Right ventricle myocardium superior (tissue), 1 donor: ENCODE measurements at regions of chr22 and their contacts with region 1.

Region 1: GRCh38 chr22:40436505-40437451 is 66.4 kb downstream of the SGSM3 start:
- DNase-seq: no peak
- ATAC-seq: peak; percentile 69

Region 2: DNA sequence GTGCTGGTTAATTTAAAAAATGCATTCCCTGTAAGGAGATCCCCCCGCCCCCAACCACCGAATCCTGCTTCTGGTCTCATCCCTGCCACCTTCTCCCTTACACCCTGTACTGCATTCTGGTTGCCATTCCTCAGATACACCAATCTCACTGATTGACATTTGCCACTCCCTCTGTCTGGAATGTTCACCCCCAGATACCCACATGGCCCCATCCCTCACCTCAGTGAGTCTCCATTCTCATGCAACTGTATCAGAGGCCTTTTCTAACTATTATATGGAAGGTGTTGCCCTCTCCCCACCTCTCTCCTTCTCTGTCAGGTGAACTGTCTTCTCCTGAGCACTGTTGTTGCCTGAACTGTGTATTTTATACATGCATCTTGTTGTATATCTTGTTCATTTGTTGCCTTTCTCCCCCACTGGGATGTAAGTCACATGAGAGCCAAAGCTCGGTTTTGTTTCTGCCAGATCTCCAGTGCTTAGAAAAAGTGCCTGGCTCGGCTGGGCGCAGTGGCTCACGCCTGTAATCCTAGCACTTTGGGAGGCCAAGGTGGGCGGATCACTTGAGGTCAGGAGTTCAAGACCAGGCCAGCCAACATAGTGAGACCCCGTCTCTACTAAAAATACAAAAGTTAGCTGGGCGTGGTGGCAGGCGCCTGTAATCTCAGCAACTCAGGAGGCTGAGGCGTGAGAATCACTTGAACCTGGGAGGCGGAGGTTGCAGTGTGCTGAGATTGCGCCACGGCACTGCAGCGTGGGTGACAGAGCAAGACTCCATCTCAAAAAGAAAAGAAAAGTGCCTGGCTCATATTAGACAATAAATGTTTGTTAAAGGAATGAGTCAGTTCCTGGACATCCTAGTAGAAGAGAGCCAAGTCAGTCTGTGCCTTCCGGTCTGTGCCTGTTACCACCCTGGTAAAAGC is 198.1 kb before region 1 on chr22:
- intact Hi-C with region 1: no loop called
- DNase-seq: peak; percentile 49
- ATAC-seq: peak; percentile 34

Region 3: DNA sequence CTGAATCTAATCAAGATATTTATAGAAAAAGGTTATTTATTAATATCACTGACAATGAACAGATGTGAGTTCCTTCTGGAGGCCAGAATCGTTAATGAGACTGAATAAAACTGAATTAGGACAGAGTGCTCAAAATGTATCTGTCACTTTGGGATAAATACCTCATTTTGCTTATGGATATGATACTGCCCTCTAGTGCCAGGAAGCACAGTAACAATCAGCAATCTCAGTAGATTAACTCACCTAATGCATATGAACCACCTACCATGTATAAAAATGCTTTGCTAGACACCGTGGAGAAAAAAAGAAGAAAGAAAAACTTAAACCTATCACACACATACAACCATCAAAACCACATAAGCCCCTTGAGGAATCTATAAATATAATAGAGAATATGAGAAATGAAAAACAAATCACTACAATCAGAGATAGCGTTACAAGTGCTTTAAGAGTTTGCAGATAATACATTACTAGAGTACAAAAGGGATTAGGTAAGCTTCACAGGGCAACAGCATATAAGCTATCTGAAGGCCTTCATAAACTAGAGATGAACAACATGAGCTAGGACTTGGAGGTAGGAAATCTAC is 51.0 kb after region 1 on chr22:
- intact Hi-C with region 1: loop called (anchors 10 kb)
- DNase-seq: no peak
- ATAC-seq: no peak

Region 4: GRCh38 chr22:40645579-40646197 is 208.9 kb after region 1 on chr22:
- intact Hi-C with region 1: loop called (anchors 2 kb)
- DNase-seq: no peak
- ATAC-seq: no peak

Region 5: GRCh38 chr22:41009202-41009943 is 572.6 kb after region 1 on chr22:
- intact Hi-C with region 1: no loop called
- DNase-seq: no peak
- ATAC-seq: no peak